ENCODE measurements at regions of chr6 and their contacts with region 1.

Region 1: GRCh38 chr6:28880894-28881780 is 42.6 kb downstream of the TRIM27 start:
- DNase-seq: peak; percentile 78 to 81
- H3K4me3 ChIP-seq: peak overlapping the region; percentile 42 to 52
- H3K27ac ChIP-seq: peak overlapping the region; percentile 38 to 59
- H3K4me1 ChIP-seq: no peaks in the 10 kb centered on the region
- H3K27me3 ChIP-seq: no peaks in the 10 kb centered on the region
- CTCF ChIP-seq: no peak
- POLR2A ChIP-seq: no peak

Region 2: DNA sequence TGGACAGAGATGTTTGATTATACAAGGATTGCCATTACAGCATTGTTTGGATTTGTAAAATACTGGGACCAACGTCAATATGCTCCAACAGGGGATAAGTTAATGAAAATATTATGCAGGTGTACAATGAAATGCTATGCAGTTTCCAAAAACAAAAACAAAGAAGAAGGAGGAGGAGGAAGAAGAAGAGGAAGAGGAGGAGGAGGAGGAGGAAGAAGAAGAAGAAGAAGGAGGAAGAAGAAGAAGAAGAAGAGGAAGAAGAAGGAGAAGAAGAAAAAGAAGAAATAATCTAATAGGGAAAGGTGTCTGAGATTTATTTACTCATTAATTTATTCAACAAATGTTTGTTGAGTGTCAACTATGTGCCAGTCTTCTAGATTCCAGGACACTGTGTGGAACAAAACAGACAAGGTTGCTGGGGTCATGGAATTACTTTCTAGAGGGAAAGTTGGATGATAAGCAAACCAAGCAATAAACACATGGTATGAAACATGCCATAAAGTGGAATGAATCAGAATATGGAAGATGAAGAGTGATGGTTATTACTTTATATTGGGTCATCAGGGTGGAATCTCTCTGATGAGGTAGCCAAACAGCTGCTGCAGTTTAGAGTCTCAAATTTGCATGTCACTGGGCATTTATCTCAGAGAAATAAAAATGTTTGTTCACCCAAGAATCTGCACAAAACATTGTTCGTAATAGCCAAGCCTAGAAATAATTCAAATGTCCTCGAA is 48.9 kb after region 1 on chr6:
- intact Hi-C with region 1: loop called (anchors 10 kb)
- DNase-seq: no peak
- H3K4me3 ChIP-seq: no peak overlapping the region
- H3K27ac ChIP-seq: no peak overlapping the region
- H3K4me1 ChIP-seq: no peaks in the 10 kb centered on the region
- H3K27me3 ChIP-seq: no peaks in the 10 kb centered on the region
- CTCF ChIP-seq: no peak
- POLR2A ChIP-seq: no peak

Measured in uterus (tissue), 4 donors.